Motor neuron (in vitro differentiated cells): ENCODE measurements at regions of chr13 and their contacts with region 1.

Region 1: DNA sequence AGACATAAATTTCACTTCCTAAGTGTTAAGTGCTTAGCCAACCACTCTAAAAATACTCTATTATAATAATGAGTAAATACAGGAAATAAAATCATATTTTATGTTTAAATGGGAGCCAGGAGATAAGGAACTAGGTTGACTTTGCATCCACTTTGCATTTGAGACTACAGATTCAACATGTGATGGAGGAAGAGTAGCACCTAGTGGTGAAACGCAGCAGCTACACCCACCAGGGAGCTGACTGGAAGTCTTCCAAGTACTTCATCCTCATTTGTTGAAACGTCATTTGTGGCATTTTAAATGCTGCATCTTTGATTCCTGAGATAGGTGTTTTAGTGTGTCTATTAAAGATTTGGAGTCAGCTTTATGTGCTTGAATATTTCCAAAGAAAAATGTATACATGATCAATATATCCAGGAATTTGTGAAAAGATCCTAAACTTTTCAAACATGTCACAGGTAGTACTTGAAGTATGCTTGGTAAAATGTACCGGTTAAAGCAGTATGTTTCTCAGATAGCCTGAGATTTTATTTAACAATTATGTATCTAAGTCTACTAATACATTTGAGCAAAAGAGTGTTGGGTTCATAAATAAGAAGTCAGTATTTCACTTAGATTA is 17.4 kb upstream of the KCTD12 start:
- ATAC-seq: peak in 6 of 8 experiments; percentile 55 to 82 (median 60)
- H3K4me3 ChIP-seq: no peak overlapping the region
- H3K27ac ChIP-seq: no peak overlapping the region
- H3K4me1 ChIP-seq: no peaks in the 10 kb centered on the region

Region 2: DNA sequence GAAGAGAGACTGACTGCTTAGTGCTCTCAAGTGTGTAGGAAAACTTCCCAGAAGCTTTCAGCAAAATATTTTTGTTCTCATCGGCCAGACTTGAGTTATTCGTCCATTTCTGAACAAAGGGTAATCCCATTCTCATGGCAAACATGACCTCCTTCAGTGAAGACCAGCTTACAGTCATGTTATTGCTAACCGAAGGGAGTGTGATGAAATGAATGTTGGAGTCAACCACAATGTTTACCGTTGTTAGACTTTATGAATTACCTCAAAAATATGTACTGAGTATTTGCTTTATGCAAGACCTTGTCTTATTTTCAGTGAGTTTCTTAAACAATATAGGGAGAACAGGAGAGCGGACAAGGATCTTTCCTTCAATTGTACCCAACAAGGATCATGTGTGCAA is 1038.9 kb before region 1 on chr13:
- in situ Hi-C with region 1: loop called in 3 of 9 experiments (anchors 10 to 25 kb)
- ATAC-seq: peak in 1 of 8 experiments; percentile 1
- H3K4me3 ChIP-seq: no peak overlapping the region
- H3K27ac ChIP-seq: no peak overlapping the region
- H3K4me1 ChIP-seq: peaks cover 0 to 12% of the 10 kb centered on the region in 2 donors

Region 3: GRCh38 chr13:75870397-75870903 is 1033.2 kb before region 1 on chr13:
- in situ Hi-C with region 1: loop called in 5 of 9 experiments (anchors 10 to 25 kb)
- ATAC-seq: peak in 1 of 8 experiments; percentile 8
- H3K4me3 ChIP-seq: no peak overlapping the region
- H3K27ac ChIP-seq: no peak overlapping the region
- H3K4me1 ChIP-seq: peaks cover 0 to 11% of the 10 kb centered on the region in 2 donors

Region 4: DNA sequence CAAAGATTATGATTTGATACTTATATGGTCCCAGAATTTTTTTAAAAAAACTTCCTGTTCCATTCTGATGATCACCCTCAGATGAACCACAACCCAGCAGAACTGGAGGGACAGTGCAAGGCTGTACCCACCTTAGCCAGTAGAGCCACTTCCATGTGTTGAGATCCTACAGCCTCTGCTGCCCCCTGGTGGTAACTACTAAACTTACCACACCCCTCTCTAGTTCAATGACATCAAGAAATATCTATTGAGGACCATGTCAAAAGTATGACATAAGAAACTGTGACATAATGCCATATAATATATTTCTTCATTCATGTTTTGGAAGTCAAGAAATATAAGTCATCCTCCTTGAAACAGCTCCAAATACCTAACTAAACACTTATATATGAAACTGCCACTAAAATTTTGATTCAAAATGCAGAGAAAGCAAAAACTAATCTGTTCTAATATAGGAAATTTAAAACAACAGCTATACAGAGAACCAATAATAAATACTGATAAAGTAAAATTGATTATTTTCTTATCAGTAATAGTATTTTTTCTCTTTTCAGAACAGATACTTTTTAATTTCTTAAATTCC is 430.0 kb before region 1 on chr13:
- in situ Hi-C with region 1: loop called in 1 of 9 experiments (anchors 10 kb)
- ATAC-seq: peak; percentile 80 to 100 (median 94)
- H3K4me3 ChIP-seq: no peak overlapping the region
- H3K27ac ChIP-seq: no peak overlapping the region
- H3K4me1 ChIP-seq: no peaks in the 10 kb centered on the region

Region 5: DNA sequence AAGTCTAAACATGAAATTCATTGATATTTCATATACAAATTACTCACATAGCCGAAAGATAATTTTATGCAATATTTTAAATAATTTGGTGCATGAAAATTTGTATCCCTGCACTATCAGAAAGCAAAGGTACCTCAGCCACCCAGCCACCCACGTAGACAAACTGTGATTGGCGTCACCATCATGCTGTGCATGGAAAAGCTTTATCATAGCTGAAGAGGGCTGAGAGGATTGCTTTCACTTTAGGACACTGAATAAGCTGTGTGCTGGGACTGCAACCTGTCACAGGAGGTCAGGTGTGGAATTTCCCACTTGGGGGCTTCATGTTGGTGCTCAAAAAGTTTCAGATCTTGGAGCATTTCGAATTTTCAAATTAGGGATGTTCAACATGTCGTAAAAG is 326.9 kb after region 1 on chr13:
- in situ Hi-C with region 1: no loop called
- ATAC-seq: no peak
- H3K4me3 ChIP-seq: no peak overlapping the region
- H3K27ac ChIP-seq: no peak overlapping the region
- H3K4me1 ChIP-seq: no peaks in the 10 kb centered on the region